Activated CD8-positive, alpha-beta T cell treated with anti-CD3 and anti-CD28 coated beads, Interleukin-2, amount 10 ng/mL, durations not matched to agents 7 days and 5 days (primary cell): ENCODE measurements at regions of chr19 and their contacts with region 1.

Region 1: GRCh38 chr19:57708641-57709361 is at the start of gene ZNF154:
- DNase-seq: peak; percentile 66
- ATAC-seq: peak; percentile 84
- H3K4me3 Mint-ChIP-seq: peak within 1 kb of the TSS; percentile 79
- H3K27ac Mint-ChIP-seq: peak within 1 kb of the TSS; percentile 86
- H3K4me1 Mint-ChIP-seq: peaks cover 20% of the 10 kb centered on the region
- H3K27me3 Mint-ChIP-seq: no peaks in the 10 kb centered on the region
- total RNA-seq, gene ZNF154: 3.0 to 3.1 TPM

Region 2: DNA sequence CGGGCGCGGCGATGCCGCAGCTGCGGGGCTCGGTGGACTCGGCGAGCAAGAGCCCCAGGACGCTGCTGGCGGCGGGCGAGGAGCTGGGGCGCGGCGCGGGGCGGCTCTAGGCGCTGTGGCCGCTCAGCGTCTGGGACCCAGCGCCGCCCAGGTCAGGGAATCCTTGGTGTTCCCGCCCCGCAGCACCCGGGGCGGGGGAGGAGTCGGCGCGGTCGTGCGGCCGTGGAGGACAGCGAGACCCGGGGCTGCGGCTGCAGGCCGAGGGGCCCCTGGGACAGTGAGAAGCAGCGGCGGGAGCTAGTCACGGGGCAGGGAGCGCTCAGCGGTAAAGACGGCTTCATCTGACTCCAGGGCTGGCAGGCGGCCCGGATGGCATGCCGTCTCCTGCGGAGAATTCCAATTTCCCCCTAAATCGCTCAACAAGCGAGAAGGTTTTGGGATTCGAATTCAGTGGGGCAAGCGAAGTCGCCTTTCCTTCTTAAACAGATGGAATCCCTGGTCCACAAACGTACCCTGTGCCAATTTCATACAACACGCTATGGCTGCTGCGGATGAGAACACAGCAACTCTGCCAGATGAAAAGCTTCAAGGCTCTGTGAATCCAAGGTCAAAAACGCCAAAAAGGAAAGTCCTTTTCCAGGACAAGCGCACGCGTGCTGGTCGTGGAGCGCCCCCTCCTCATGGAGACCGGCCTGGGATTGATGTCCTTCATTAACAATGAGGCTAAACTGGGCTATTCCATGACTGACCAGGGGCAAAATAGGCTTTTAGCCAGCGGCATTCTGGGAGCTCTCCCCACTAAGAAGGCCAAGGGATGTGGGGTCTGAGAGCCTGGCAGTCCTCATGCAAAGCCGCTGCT is 44.3 kb before region 1 on chr19:
- CTCF ChIA-PET with region 1: no interaction called
- POLR2A ChIA-PET with region 1: no interaction called
- DNase-seq: no peak
- ATAC-seq: peak; percentile 69
- H3K4me3 Mint-ChIP-seq: peak overlapping the region; percentile 73
- H3K27ac Mint-ChIP-seq: no peak overlapping the region
- H3K4me1 Mint-ChIP-seq: peaks cover 3% of the 10 kb centered on the region
- H3K27me3 Mint-ChIP-seq: peaks cover 13% of the 10 kb centered on the region

Region 3: DNA sequence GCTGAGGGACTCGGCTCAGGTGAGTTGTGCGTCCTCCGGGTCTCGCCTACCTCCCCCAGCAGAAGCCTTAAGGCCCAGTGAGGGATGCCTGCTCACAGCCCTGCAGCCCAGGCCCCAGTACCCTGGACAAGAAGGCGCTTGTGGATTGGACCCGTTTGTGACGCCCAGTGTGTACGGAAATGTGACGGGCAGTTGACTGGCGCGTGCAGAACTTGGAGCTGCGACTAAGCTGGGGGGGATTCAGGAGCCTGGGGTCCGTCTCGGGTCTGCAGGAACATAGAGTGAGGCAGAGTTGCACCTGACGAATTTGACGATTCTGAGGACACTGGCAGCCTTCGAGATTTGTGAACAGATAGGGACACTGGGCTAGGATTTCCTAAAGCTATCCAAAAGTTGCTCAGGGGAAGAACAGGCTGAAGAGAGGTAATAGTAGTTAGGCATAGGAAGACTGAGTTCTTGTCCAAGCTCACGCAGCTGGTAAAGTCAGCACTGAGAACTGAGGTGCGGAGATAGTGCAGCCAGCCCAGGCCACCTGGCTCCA is 26.5 kb before region 1 on chr19:
- CTCF ChIA-PET with region 1: interaction called, 3 read pairs
- POLR2A ChIA-PET with region 1: interaction called, 10 read pairs
- DNase-seq: no peak
- ATAC-seq: no peak
- H3K4me3 Mint-ChIP-seq: peak overlapping the region; percentile 93
- H3K27ac Mint-ChIP-seq: peak overlapping the region; percentile 93
- H3K4me1 Mint-ChIP-seq: peaks cover 31% of the 10 kb centered on the region
- H3K27me3 Mint-ChIP-seq: no peaks in the 10 kb centered on the region